Activated CD8-positive, alpha-beta T cell treated with anti-CD3 and anti-CD28 coated beads, Interleukin-2, amount 10 ng/mL, durations not matched to agents 7 days and 5 days (primary cell): ENCODE measurements at regions of chr1 and their contacts with region 1.

Region 1: GRCh38 chr1:3618881-3619671 is 5.7 kb upstream of the TPRG1L start:
- DNase-seq: peak; percentile 84
- ATAC-seq: peak; percentile 83
- H3K4me3 Mint-ChIP-seq: no peak overlapping the region
- H3K27ac Mint-ChIP-seq: no peak overlapping the region
- H3K4me1 Mint-ChIP-seq: peaks cover 13% of the 10 kb centered on the region
- H3K27me3 Mint-ChIP-seq: peaks cover 9% of the 10 kb centered on the region

Region 2: DNA sequence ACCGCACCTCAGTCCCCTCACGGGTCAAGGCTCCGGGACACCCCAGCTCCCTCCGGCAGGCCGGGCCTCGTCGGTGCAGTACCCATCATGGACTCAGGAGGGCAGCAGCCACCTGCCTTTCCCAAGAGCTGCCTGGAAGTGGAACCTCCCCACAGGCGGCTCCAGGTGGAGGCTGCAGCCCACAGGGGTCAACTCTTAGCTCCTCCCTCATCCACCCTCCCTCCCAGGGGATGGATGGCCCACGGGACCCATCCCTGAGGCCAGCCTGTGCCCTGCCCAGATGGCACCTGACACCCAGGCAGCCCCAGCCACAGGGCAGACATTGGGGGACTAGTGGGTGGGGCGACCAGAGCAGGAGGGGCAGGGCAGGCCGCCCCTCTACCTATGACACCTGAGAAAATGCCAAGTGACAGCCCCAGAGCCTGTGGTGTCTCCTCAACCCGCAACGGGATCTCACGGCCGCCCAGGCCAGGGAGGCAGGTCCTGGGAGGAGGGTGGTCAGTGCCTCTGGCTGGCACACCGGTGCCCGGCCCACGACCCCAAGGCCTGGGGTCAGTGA is 165.8 kb before region 1 on chr1:
- CTCF ChIA-PET with region 1: interaction called, 18 read pairs
- POLR2A ChIA-PET with region 1: interaction called, 3 read pairs
- DNase-seq: peak; percentile 75
- ATAC-seq: peak; percentile 83
- H3K4me3 Mint-ChIP-seq: no peak overlapping the region
- H3K27ac Mint-ChIP-seq: no peak overlapping the region
- H3K4me1 Mint-ChIP-seq: peaks cover 2% of the 10 kb centered on the region
- H3K27me3 Mint-ChIP-seq: peaks cover 5% of the 10 kb centered on the region

Region 3: GRCh38 chr1:3491291-3492246 is 127.5 kb before region 1 on chr1:
- CTCF ChIA-PET with region 1: interaction called, 31 read pairs
- POLR2A ChIA-PET with region 1: no interaction called
- DNase-seq: peak; percentile 83
- ATAC-seq: peak; percentile 94
- H3K4me3 Mint-ChIP-seq: peak overlapping the region; percentile 15
- H3K27ac Mint-ChIP-seq: no peak overlapping the region
- H3K4me1 Mint-ChIP-seq: peaks cover 5% of the 10 kb centered on the region
- H3K27me3 Mint-ChIP-seq: no peaks in the 10 kb centered on the region

Region 4: GRCh38 chr1:3564921-3565827 is 53.9 kb before region 1 on chr1:
- CTCF ChIA-PET with region 1: interaction called, 27 read pairs
- POLR2A ChIA-PET with region 1: no interaction called
- DNase-seq: peak; percentile 43
- ATAC-seq: peak; percentile 44
- H3K4me3 Mint-ChIP-seq: no peak overlapping the region
- H3K27ac Mint-ChIP-seq: no peak overlapping the region
- H3K4me1 Mint-ChIP-seq: no peaks in the 10 kb centered on the region
- H3K27me3 Mint-ChIP-seq: no peaks in the 10 kb centered on the region